ENCODE measurements at regions of chr12 and their contacts with region 1.

Region 1: DNA sequence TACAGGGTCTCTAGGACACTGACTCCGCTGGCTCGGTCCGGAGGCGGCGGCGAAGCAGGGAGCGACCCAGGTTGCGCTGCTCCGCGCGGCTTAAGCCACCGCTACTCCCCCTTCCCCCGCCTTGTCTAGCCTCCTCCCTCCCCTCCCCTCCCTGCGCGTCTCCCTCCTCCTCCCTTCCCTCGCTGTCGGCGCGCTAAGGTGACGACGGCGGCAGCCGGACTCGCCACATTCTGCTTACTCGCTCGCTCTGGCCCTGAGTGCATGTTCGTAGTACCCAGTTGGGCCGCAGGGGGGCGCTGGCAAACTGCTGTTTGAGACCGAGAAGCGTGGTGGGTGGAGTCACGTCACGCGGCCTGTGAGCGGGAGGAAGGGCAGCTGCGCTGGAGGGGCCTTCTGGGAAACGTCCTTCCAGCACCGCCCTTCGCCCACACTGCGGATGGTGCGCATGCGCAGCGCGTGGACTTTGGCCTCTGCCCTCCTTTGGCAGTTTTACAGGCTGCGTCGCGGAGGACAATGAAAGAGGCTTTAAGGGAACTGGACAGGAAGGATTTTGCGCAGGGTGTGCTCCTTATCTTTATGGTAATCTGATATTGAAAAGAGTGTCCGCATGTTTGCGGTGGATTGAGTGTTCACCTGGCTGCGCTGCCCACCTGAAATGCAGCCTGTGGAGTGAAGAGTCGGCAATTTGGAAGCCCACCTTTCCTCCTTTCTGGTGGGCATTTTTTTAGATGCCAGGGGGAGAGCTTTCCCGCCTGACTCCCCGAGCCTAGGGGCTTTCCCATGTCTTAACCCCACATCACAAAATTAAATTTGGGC is at the start of gene SCAF11:
- DNase-seq: peak; percentile 99 to 100
- H3K4me3 ChIP-seq: peak within 1 kb of the TSS; percentile 92
- H3K4me1 ChIP-seq: peaks cover 16% of the 10 kb centered on the region
- H3K27me3 ChIP-seq: no peaks in the 10 kb centered on the region

Region 2: DNA sequence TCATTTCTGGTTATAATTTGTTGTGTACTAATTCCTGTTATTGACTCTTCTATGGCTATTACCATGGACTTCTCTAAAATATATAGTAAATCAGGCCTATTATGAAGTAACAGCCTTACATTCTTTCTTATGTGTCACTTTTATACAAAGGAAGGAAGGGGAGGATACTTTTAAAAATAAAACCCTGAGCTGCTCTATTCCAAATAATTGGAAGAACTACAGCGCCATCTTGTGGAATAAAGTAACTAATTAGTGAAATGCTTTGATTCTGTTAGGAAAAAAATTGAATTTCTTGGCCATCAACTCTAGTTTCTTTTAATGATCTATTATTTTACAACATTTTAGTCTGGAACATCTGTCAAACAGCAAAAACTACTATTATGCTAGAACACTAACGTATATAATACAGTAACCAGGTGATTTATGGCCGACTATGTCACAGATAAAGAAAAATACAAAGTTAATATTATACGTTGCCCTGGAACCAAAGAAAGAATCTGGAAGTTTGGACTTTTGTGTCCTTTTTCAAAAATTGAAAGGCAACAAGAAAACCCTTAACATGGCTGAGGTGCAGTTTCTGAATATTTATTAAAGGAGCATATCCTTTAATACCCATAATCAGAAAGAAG is 1059.6 kb before region 1 on chr12:
- in situ Hi-C with region 1: no loop called
- DNase-seq: peak in 1 of 2 experiments; percentile 80
- H3K4me3 ChIP-seq: no peak overlapping the region
- H3K4me1 ChIP-seq: peaks cover 6% of the 10 kb centered on the region
- H3K27me3 ChIP-seq: no peaks in the 10 kb centered on the region

Region 3: DNA sequence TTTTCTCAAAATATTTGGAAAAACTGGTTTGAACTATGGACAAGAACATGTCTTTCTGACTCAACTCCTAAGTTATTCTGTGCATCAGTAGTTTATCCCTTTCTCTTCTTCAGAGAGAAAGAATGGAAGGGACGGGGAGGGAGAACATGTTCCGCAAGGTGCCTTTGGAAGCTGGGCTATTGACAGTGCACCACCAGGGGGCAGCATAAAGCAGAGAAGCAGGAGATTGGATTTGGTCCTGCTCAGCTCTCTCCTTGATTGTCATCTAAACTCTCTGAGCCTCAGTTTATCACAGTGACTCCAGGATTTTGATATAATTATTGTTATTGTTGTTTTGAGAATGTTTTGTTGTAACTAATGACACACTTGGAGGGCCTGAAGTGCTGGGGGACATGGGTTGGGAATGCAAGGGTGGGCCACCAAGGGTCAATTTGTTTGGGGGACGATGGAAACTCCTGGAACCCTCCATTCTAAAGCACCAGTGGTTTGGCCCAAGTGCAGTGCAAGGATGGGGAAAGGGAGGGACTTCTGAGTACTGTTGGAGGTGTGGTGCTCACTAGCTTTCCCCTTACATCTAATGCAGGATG is 820.1 kb before region 1 on chr12:
- in situ Hi-C with region 1: no loop called
- DNase-seq: peak; percentile 67 to 92
- H3K4me3 ChIP-seq: no peak overlapping the region
- H3K4me1 ChIP-seq: no peaks in the 10 kb centered on the region
- H3K27me3 ChIP-seq: no peaks in the 10 kb centered on the region

Region 4: DNA sequence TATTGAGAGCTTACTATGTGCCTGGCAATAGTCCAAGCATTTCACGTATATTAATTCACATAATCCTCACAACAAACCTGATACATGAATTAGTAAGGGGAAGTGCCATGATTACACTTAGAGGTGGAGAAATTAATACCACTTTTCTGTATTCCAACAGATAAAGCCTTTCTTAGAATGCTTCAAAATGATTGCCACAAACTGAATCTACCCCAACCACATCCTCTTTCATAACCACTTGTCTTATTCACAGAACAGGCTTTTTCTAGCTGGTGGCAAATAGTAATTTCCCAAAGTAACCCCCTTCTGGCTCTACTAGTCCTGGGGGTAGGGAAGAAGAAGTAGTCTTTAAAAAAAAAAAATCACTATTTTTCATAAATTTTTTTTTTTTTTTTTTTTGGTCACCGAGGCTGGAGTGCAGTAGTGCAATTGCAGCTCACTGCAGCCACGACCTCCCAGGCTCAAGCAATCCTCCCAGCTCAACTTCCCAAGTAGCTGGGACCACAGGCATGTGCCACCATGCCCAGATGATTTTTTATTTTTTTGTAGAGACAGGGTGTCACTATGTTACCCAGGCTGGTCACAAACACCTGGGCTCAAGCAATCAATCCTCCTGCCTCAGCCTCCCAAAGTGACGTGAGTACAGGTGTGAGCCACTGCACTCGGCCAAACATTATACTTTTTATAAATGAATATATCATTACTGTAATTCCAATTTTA is 320.2 kb before region 1 on chr12:
- in situ Hi-C with region 1: no loop called
- DNase-seq: no peak
- H3K4me3 ChIP-seq: no peak overlapping the region
- H3K4me1 ChIP-seq: no peaks in the 10 kb centered on the region
- H3K27me3 ChIP-seq: no peaks in the 10 kb centered on the region

Region 5: GRCh38 chr12:46024099-46024498 is 33.4 kb after region 1 on chr12:
- in situ Hi-C with region 1: no loop called
- DNase-seq: no peak
- H3K4me3 ChIP-seq: no peak overlapping the region
- H3K4me1 ChIP-seq: no peaks in the 10 kb centered on the region
- H3K27me3 ChIP-seq: no peaks in the 10 kb centered on the region

Region 6: GRCh38 chr12:46268590-46269558 is 278.2 kb after region 1 on chr12 and contains the start of gene SLC38A1:
- in situ Hi-C with region 1: loop called (anchors 25 kb)
- DNase-seq: peak; percentile 67 to 85
- H3K4me3 ChIP-seq: peak within 1 kb of the TSS; percentile 73
- H3K4me1 ChIP-seq: peaks cover 33% of the 10 kb centered on the region
- H3K27me3 ChIP-seq: no peaks in the 10 kb centered on the region